ENCODE measurements at regions of chr11 and their contacts with region 1.

Region 1: GRCh38 chr11:62652161-62653006 is 718 bp downstream of the INTS5 start:
- DNase-seq: no peak
- ATAC-seq: no peak
- H3K4me3 ChIP-seq: peak overlapping the region; percentile 94
- H3K27ac ChIP-seq: peak overlapping the region; percentile 90
- H3K4me1 ChIP-seq: no peaks in the 10 kb centered on the region
- H3K27me3 ChIP-seq: no peaks in the 10 kb centered on the region

Region 2: GRCh38 chr11:62591448-62592145 is 60.8 kb before region 1 on chr11 and contains the start of gene TUT1:
- intact Hi-C with region 1: loop called in 1 of 4 experiments (anchors 10 kb)
- DNase-seq: peak; percentile 95 to 97 (median 97)
- ATAC-seq: peak; percentile 95 to 96
- H3K4me3 ChIP-seq: peak within 1 kb of the TSS; percentile 79
- H3K27ac ChIP-seq: peak within 1 kb of the TSS; percentile 97
- H3K4me1 ChIP-seq: peaks cover 9% of the 10 kb centered on the region
- H3K27me3 ChIP-seq: no peaks in the 10 kb centered on the region
- total RNA-seq, gene TUT1: 8.0 to 15.3 (median 11.5) TPM